ENCODE measurements at regions of chr17 and their contacts with region 1.

Region 1: DNA sequence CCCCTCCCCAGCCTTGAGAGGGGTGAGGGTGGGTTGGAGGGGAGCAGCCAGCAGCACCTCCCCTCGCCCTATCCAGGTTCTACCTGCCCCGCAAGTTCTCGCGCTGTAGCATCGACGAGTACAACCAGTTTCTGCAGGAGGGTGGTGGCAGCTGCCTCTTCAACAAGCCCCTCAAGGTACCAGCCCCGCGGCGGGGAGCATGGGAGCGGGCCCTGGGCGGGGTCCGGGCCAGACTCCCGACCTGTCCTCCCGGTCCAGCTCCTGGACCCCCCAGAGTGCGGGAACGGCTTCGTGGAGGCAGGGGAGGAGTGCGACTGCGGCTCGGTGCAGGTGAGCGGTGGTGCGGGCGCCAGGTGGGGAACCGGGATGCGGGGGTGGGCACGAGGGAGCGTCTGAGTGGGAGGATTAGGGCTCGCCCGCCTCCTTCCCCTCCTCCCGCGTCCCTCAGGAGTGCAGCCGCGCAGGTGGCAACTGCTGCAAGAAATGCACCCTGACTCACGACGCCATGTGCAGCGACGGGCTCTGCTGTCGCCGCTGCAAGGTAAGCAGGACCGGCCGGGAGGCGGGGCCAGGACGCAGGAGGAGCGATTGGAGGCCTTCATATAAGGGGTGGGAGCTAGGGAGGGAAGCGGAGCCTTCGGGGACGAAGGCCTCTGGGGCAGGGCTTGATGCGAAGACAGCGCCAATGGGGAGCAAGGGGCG is 16.5 kb downstream of the ADAM11 start:
- DNase-seq: peak; percentile 99
- H3K4me3 ChIP-seq: peak overlapping the region; percentile 35 to 70 (median 56)
- H3K27ac ChIP-seq: peak overlapping the region; percentile 43 to 90 (median 80)
- H3K4me1 ChIP-seq: peaks cover 0 to 53% (median 35%) of the 10 kb centered on the region in 4 donors
- H3K27me3 ChIP-seq: peaks cover 5 to 10% (median 9%) of the 10 kb centered on the region in 3 donors
- CTCF ChIP-seq: peak in 1 of 4 experiments; percentile 28
- EP300 ChIP-seq: no peak
- POLR2A ChIP-seq: no peak

Region 2: DNA sequence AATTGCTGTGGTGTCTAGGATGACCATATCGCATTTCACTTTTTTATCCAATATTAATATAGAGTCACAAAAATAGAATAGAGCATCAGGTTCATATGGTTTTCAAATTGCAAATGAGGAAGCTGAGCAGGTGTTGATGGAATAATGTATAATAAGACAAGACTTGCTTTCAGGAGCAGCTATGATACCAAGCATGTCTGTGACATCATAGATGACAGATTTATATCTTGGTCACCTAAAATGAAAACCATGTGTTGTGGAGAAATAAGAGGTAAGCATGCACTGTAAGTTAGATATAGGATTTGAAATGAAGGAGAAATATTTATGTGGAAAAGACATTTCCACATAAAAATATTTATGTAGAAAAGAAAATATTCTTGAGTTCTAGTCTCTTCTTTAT is 110.4 kb before region 1 on chr17:
- intact Hi-C with region 1: no loop called
- DNase-seq: no peak
- H3K4me3 ChIP-seq: no peak overlapping the region
- H3K27ac ChIP-seq: no peak overlapping the region
- H3K4me1 ChIP-seq: no peaks in the 10 kb centered on the region
- H3K27me3 ChIP-seq: no peaks in the 10 kb centered on the region
- CTCF ChIP-seq: no peak
- EP300 ChIP-seq: no peak
- POLR2A ChIP-seq: no peak

Region 3: GRCh38 chr17:44804302-44805089 is 29.2 kb after region 1 on chr17:
- intact Hi-C with region 1: loop called (anchors 2 kb)
- DNase-seq: peak; percentile 95
- H3K4me3 ChIP-seq: no peak overlapping the region
- H3K27ac ChIP-seq: peak overlapping the region; percentile 85 to 99 (median 96)
- H3K4me1 ChIP-seq: peaks cover 0 to 98% (median 91%) of the 10 kb centered on the region in 4 donors
- H3K27me3 ChIP-seq: no peaks in the 10 kb centered on the region
- CTCF ChIP-seq: no peak
- EP300 ChIP-seq: peak; percentile 80 to 92 (median 89)
- POLR2A ChIP-seq: no peak

Region 4: GRCh38 chr17:44829523-44830358 is 54.5 kb after region 1 on chr17 and contains the start of gene GJC1:
- intact Hi-C with region 1: loop called (anchors 5 kb)
- DNase-seq: peak; percentile 78
- H3K4me3 ChIP-seq: peak within 1 kb of the TSS; percentile 83 to 87 (median 86)
- H3K27ac ChIP-seq: peak within 1 kb of the TSS; percentile 88 to 99 (median 96)
- H3K4me1 ChIP-seq: peaks cover 0 to 21% (median 16%) of the 10 kb centered on the region in 4 donors
- H3K27me3 ChIP-seq: peaks cover 0 to 8% (median 3%) of the 10 kb centered on the region in 3 donors
- CTCF ChIP-seq: no peak
- EP300 ChIP-seq: no peak
- POLR2A ChIP-seq: peak in 1 of 2 donors; percentile 42
- total RNA-seq, gene GJC1: 68.0 to 134 (median 82.7) TPM

Region 5: DNA sequence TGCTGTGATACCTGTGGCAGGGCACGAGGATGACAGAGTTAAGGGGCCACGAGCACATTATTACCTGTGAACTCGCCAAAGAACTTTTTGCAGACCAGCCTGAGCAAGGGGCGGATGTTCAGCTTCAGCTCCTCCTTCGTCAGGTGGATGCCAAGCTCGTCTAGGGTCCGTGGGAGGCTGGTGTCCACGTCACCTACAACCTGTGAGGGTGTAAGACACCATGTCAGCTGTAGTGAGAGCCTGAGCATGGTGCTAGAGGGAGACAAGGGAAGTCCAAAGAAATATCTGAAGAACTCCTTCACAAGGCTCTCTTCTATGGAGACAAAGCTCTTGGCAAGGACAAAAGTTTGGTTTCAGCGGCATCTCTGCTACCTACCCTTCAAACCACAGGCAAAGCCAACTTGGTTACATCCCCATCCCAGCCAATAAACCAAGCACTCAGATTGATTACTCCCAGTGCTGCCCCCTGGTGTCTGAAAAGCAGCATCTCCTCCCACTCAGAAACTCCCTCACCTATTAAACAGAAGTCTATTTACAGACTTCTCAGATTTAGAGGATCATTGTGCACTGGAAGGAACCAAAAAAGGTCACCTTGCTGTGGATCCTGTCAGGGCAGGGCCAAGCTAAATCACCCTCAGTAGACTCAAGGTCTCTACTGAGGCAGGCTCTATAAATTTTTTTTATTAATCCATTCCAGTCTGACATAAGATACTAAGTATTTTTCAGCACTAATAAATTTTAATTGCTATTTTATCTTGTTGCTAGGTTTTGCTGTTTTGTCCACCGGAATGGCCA is 89.8 kb after region 1 on chr17:
- intact Hi-C with region 1: loop called (anchors 1 kb)
- DNase-seq: peak; percentile 86
- H3K4me3 ChIP-seq: no peak overlapping the region
- H3K27ac ChIP-seq: peak overlapping the region in 3 of 4 donors; percentile 82 to 91 (median 83)
- H3K4me1 ChIP-seq: peaks cover 0 to 59% (median 49%) of the 10 kb centered on the region in 4 donors
- H3K27me3 ChIP-seq: no peaks in the 10 kb centered on the region
- CTCF ChIP-seq: peak; percentile 83 to 90 (median 87)
- EP300 ChIP-seq: peak in 2 of 4 donors; percentile 23 to 35
- POLR2A ChIP-seq: no peak

Region 6: GRCh38 chr17:44878627-44879221 is 103.4 kb after region 1 on chr17:
- intact Hi-C with region 1: loop called (anchors 1 kb)
- DNase-seq: no peak
- H3K4me3 ChIP-seq: no peak overlapping the region
- H3K27ac ChIP-seq: peak overlapping the region in 1 of 4 donors; percentile 54
- H3K4me1 ChIP-seq: peaks cover 0 to 7% (median 2%) of the 10 kb centered on the region in 4 donors
- H3K27me3 ChIP-seq: no peaks in the 10 kb centered on the region
- CTCF ChIP-seq: peak; percentile 35 to 74 (median 59)
- EP300 ChIP-seq: no peak
- POLR2A ChIP-seq: no peak

Region 7: DNA sequence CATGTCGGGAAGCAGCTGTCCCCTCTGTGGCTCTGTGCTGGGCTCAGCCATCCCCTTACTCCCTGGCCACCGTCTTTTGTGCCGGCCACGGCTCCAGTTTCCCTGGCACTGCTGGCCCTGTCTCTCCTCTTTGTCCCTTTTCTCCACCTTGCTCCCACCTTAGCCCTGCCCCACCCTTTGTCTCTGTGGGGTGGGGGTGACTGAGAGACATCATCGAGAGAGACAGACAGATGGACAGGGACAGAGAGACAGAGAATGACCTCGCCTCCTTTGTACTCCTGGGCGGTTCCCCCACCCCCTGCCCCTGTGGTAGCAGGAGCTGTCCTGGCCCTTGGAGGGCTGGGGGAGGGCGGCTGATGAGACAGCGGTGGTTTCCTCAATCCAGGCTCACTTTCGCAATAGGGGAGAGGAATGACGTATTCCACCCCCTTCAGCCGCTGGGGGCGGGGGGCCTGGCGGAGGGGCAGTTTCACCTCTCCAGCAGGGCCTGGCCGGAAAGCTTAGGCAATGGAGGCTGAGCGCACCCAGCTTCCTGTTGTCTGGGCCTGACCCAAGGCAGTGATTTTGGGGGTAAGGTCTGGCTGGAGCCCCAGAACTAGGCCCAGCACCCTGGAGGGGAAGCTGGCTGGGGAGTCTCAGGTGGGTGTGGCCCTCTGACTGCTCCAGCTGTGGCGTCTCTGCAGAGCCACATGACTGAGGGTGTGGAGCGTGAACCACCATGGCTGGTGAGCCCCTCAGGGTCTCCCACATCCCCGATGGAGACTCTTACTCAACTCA is 453.7 kb after region 1 on chr17:
- intact Hi-C with region 1: no loop called
- DNase-seq: peak; percentile 96
- H3K4me3 ChIP-seq: no peak overlapping the region
- H3K27ac ChIP-seq: peak overlapping the region; percentile 62 to 79 (median 74)
- H3K4me1 ChIP-seq: peaks cover 0 to 21% (median 11%) of the 10 kb centered on the region in 4 donors
- H3K27me3 ChIP-seq: peaks cover 0 to 6% (median 0%) of the 10 kb centered on the region in 3 donors
- CTCF ChIP-seq: no peak
- EP300 ChIP-seq: peak in 2 of 4 donors; percentile 31 to 55
- POLR2A ChIP-seq: no peak

Measured in sigmoid colon (tissue), 7 donors.